HepG2 (cell line): ENCODE measurements at regions of chr13 and their contacts with region 1.

Region 1: DNA sequence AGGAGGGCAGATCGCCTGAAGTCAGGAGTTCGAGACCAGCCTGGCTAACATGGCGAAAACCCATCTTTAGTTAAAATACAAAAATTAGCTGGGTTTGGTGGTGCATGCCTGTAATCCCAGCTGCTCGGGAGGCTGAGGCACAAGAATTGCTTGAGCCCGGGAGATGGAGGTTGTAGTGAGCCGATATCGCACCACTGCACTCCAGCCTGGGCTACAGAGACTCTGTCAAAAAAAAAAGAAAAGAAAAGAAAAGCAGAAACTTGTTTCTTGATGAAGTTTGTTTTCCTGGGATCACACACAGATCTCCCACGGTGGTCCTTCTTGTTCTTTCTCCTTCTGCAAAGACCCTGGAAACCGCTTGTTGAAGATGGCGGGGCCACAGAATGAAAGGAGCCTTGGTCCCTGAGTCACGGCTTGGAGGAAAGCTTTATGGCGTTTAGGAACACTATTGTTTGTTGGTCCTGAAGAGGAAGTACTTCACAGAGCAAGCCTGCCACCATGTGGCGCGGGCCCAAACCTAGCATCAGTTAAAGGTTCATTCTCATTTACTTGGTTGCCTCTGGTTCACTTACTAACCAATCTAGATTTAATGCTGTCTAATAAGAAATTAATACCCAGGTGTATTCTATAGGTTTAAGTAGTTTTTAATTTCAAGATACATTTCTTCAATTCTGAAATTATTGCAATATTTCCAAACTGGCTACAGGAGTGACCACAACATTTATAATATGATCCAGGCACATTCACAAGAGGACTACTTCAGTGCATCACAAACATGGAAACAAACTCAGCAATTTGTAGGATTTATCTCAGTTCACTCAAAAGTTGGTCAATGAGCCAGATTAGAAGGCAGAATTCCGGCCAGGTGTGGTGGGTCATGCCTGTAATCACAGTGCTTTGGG is 21.3 kb upstream of the ARL11 start:
- DNase-seq: peak; percentile 77
- ATAC-seq: peak; percentile 96
- H3K4me3 ChIP-seq: peak overlapping the region; percentile 31 to 67 (median 62); a peak in 5 of 6 replicates
- H3K27ac ChIP-seq: no peak overlapping the region
- H3K4me1 ChIP-seq: peaks cover 32% of the 10 kb centered on the region
- H3K27me3 ChIP-seq: no peaks in the 10 kb centered on the region
- CTCF ChIP-seq: peak; percentile 91
- EP300 ChIP-seq: no peak
- POLR2A ChIP-seq: no peak
- RAD21 ChIP-seq: peak; percentile 88

Region 2: GRCh38 chr13:49517461-49517860 is 89.5 kb before region 1 on chr13:
- CTCF ChIA-PET with region 1: no interaction called
- POLR2A ChIA-PET with region 1: no interaction called
- in situ Hi-C with region 1: no loop called
- intact Hi-C with region 1: loop called (anchors 2 kb)
- DNase-seq: peak; percentile 26
- ATAC-seq: peak; percentile 80
- H3K4me3 ChIP-seq: no peak overlapping the region
- H3K27ac ChIP-seq: no peak overlapping the region
- H3K4me1 ChIP-seq: peaks cover 10% of the 10 kb centered on the region
- H3K27me3 ChIP-seq: no peaks in the 10 kb centered on the region
- CTCF ChIP-seq: peak; percentile 34
- EP300 ChIP-seq: no peak
- POLR2A ChIP-seq: no peak
- RAD21 ChIP-seq: peak; percentile 18; the same call in 1 of the 2 replicates